ENCODE measurements at regions of chr6 and their contacts with region 1.

Region 1: DNA sequence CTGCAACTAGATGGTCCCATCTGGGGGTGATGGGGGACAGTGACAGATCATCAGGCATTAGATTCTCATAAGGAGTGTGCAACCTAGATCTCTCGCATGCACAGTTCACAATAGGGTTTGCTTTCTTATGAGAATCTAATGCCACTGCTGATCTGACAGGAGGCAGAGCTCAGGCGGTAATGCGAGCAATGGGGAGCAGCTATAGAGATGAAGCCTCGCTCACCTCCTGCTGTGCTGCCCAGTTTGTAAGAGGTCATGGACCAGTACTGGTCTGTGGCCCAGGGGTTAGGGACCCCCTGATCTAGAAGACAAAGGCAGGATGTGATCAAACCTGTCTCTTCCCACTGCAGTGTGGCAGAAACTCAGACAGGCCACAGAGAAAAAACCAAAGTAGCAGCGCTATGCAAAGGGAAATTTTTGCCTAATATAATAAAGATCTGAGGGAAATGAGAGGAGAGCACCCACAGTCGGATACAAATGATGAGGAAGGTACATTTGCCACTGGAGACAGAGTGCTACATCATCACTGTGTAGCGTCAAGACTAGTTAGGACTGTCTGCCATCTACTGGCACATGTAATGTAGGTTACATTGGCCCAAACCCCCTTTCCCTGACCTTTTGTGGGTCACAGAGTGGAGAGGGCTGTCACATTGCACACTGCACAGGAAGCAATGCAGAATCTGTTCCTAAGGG is 4.1 kb upstream of the LY86 start:
- DNase-seq: no peak
- H3K4me3 Mint-ChIP-seq: no peak overlapping the region
- H3K27ac Mint-ChIP-seq: no peak overlapping the region
- H3K4me1 Mint-ChIP-seq: no peaks in the 10 kb centered on the region
- H3K27me3 Mint-ChIP-seq: no peaks in the 10 kb centered on the region
- CTCF ChIP-seq: peak; percentile 22

Region 2: DNA sequence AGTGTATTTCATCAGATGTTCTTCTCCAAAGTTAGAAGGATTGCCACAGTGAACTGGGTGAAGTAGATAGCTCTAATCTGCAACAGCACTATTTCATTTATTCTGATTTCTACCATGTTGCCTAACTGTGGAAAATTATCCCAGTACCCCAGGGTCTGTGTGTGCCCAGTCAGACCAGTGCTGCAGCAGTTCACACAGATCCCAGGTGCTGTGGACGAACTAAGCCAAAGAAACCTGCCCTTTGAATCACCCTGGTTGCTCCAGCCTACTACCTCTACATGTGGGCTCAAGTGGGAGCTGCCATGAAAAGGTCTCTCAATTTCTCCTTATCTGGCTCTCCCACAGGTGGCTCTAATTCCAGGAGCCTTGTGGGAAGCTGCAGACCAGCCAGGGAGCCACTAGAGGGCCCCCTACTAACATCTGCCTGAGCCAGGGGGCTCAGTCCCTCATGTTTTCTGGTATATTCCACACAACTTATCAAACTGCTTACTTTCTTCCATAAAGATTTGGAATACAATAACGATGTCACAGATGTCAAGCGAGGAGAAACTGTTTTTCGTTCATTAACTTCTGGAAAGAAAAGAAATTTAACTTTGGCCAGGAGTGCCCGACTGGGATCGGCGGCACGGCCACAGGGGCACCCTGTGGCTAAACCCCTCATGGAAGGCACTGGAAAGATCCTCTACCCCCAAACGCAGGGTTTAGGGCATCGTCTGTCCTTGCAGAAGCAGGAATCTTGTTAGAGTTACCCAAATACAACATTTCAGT is 27.5 kb before region 1 on chr6:
- CTCF ChIA-PET with region 1: interaction called, 3 read pairs
- POLR2A ChIA-PET with region 1: interaction called, 3 read pairs
- intact Hi-C with region 1: loop called (anchors 2 kb)
- DNase-seq: peak; percentile 74
- H3K4me3 Mint-ChIP-seq: peak overlapping the region; percentile 2
- H3K27ac Mint-ChIP-seq: peak overlapping the region; percentile 90
- H3K4me1 Mint-ChIP-seq: peaks cover 59% of the 10 kb centered on the region
- H3K27me3 Mint-ChIP-seq: no peaks in the 10 kb centered on the region
- CTCF ChIP-seq: peak; percentile 70

Measured in MCF 10A (cell line).